ENCODE measurements at regions of chr11 and their contacts with region 1.

Region 1: DNA sequence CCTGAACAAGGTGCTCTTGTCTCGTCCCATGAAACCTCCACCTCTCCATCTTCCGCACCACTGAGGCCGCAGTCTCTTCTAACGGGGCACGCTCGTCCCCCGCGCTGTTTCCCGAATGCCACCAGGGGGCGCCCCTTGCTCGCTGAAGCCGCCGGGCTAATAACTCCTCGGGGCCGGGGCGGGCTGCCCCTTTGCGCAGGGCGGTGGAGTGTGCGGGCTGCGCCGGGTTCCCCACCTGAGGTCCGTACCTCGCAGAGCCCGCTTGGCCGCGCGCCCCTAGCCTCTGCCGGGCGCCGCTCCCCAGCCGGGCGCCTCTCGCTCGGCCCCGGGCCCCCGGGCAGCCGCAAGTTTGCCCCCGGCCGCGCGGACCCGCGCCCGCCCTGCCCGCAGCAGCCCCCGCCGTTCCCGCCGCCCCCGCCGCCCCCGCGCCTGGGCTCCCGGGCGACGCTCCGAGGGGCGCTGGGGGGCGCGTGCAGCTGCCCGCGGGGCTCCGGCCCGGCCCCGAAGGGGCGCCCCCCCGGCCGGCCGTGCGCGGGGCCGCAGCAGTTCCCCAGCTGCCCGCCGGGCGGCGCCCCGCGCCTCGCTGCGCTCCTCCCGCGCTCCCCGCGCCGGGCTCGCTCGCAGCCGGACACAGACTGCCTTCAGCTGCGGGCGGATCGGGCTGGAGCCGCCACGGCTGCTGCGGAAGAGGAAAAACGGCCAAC is at the start of gene GRIK4:
- DNase-seq: no peak
- H3K4me3 ChIP-seq: peak within 1 kb of the TSS; percentile 34 to 72 (median 47)
- H3K27ac ChIP-seq: peak within 1 kb of the TSS in 1 of 4 donors; percentile 55
- H3K4me1 ChIP-seq: peaks cover 0 to 9% (median 6%) of the 10 kb centered on the region in 3 donors
- H3K27me3 ChIP-seq: peaks cover 0 to 89% (median 0%) of the 10 kb centered on the region in 4 donors
- CTCF ChIP-seq: peak; percentile 88 to 96 (median 94)
- POLR2A ChIP-seq: no peak
- total RNA-seq, gene GRIK4: 0.15 to 0.19 TPM in 2 of 4 donors, not detected in the others

Region 2: DNA sequence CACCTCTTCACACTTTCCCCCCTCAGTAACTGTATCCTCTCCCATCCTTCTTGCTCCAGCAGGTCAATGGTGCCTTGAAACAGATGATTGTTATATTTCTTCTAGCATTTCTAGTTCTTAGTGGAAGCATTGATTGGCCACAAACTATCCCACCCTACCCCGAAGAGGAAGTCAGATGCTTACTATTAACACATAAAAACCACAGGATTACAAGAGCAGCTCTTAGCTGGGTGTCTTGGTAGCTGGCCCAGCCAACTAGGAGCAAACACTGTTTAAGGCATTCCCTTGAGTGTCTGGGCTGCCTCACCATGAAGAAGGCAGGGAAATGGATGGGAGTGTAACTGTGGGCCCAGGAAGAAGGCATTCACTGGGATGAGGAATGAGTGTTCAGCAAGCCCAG is 176.9 kb after region 1 on chr11:
- intact Hi-C with region 1: loop called (anchors 5 kb)
- DNase-seq: no peak
- H3K4me3 ChIP-seq: no peak overlapping the region
- H3K27ac ChIP-seq: no peak overlapping the region
- H3K4me1 ChIP-seq: no peaks in the 10 kb centered on the region
- H3K27me3 ChIP-seq: peaks cover 0 to 32% (median 0%) of the 10 kb centered on the region in 4 donors
- CTCF ChIP-seq: no peak
- POLR2A ChIP-seq: no peak

Region 3: GRCh38 chr11:120952461-120953434 is 441.5 kb after region 1 on chr11:
- intact Hi-C with region 1: loop called (anchors 5 kb)
- DNase-seq: peak; percentile 6
- H3K4me3 ChIP-seq: peak overlapping the region in 3 of 4 donors; percentile 20 to 35 (median 23)
- H3K27ac ChIP-seq: no peak overlapping the region
- H3K4me1 ChIP-seq: peaks cover 6 to 19% (median 8%) of the 10 kb centered on the region in 3 donors
- H3K27me3 ChIP-seq: peaks cover 0 to 20% (median 0%) of the 10 kb centered on the region in 4 donors
- CTCF ChIP-seq: peak; percentile 52 to 77 (median 70)
- POLR2A ChIP-seq: no peak